ENCODE measurements at regions of chr6 and their contacts with region 1.

Region 1: GRCh38 chr6:53322188-53323029 is 26.3 kb downstream of the ELOVL5 start:
- DNase-seq: no peak
- ATAC-seq: no peak
- H3K4me3 Mint-ChIP-seq: peak overlapping the region; percentile 1
- H3K27ac Mint-ChIP-seq: peak overlapping the region; percentile 51
- H3K4me1 Mint-ChIP-seq: peaks cover 80% of the 10 kb centered on the region
- H3K27me3 Mint-ChIP-seq: no peaks in the 10 kb centered on the region
- CTCF ChIP-seq: no peak

Region 2: GRCh38 chr6:53309059-53309900 is 13.1 kb before region 1 on chr6:
- CTCF ChIA-PET with region 1: interaction called, 7 read pairs
- POLR2A ChIA-PET with region 1: interaction called, 4 read pairs
- intact Hi-C with region 1: loop called (anchors 1 kb)
- DNase-seq: no peak
- ATAC-seq: peak; percentile 34
- H3K4me3 Mint-ChIP-seq: peak overlapping the region; percentile 57
- H3K27ac Mint-ChIP-seq: peak overlapping the region; percentile 92
- H3K4me1 Mint-ChIP-seq: peaks cover 84% of the 10 kb centered on the region
- H3K27me3 Mint-ChIP-seq: no peaks in the 10 kb centered on the region
- CTCF ChIP-seq: no peak

Region 3: DNA sequence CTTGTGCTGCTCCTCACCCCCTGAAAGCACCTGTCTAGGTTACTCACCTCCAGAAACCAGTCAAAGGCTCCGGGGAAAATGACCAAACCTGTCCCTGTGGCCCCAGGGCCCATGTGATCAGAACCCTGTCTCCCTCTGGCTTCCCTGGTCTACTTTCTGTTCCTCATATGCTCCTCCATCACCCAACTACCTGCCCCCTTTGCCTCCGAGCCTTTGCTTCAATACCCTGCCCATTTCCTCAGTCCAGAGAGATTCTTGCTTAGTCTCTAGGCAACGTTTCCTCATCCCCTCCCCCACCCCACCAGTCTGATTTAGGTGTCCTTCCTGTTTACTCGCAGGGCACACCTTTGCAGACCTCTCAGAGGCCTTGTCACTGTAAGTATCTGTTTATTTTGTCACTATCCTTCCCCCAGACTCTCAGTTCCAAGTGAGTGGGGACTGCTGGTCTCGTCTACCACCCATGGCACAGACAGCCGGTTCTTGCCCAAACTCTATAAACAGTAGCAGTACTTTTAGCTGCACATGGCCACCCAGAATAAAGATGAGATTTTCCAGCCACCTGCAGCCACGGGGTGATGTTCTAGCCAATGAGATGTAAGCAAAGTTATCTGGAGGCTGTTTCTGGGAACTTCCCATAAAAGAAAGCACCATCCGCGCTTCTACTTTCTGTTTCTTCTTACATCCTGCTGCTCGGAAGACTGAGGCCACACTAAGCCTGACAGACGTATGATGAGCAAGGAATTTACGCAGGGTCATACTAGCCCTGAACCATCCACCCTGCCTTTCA is 13.0 kb after region 1 on chr6:
- CTCF ChIA-PET with region 1: interaction called, 4 read pairs
- POLR2A ChIA-PET with region 1: interaction called, 3 read pairs
- intact Hi-C with region 1: loop called (anchors 1 kb)
- DNase-seq: peak; percentile 56
- ATAC-seq: peak; percentile 85
- H3K4me3 Mint-ChIP-seq: peak overlapping the region; percentile 84
- H3K27ac Mint-ChIP-seq: peak overlapping the region; percentile 97
- H3K4me1 Mint-ChIP-seq: peaks cover 93% of the 10 kb centered on the region
- H3K27me3 Mint-ChIP-seq: no peaks in the 10 kb centered on the region
- CTCF ChIP-seq: no peak

Region 4: GRCh38 chr6:53417140-53417539 is 94.7 kb after region 1 on chr6:
- CTCF ChIA-PET with region 1: no interaction called
- POLR2A ChIA-PET with region 1: no interaction called
- intact Hi-C with region 1: no loop called
- DNase-seq: no peak
- ATAC-seq: no peak
- H3K4me3 Mint-ChIP-seq: no peak overlapping the region
- H3K27ac Mint-ChIP-seq: no peak overlapping the region
- H3K4me1 Mint-ChIP-seq: peaks cover 4% of the 10 kb centered on the region
- H3K27me3 Mint-ChIP-seq: no peaks in the 10 kb centered on the region
- CTCF ChIP-seq: no peak

Measured in activated B cell treated with CpG ODN at 0.5 μM for 24 hours (primary cell).